SK-N-SH (cell line): ENCODE measurements at regions of chr15 and their contacts with region 1.

Region 1: GRCh38 chr15:99104788-99105513 is at the start of gene SYNM:
- DNase-seq: peak; percentile 98
- H3K4me3 ChIP-seq: peak within 1 kb of the TSS; percentile 61 to 62
- H3K27ac ChIP-seq: peak within 1 kb of the TSS in 1 of 2 experiments; percentile 75; a peak in 2 of 4 replicates
- H3K4me1 ChIP-seq: peaks cover 0 to 10% of the 10 kb centered on the region in 2 experiments; a peak in 2 of 4 replicates
- H3K27me3 ChIP-seq: no peaks in the 10 kb centered on the region
- CTCF ChIP-seq: peak; percentile 72
- EP300 ChIP-seq: no peak
- RAD21 ChIP-seq: peak; percentile 78
- polyA plus RNA-seq, gene SYNM: 4.3 and 5.0 TPM in 2 replicates

Region 2: GRCh38 chr15:99032935-99033334 is 72.0 kb before region 1 on chr15:
- CTCF ChIA-PET with region 1: no interaction called
- POLR2A ChIA-PET with region 1: no interaction called
- DNase-seq: no peak
- H3K4me3 ChIP-seq: no peak overlapping the region
- H3K27ac ChIP-seq: no peak overlapping the region
- H3K4me1 ChIP-seq: peaks cover 0 to 5% of the 10 kb centered on the region in 2 experiments; a peak in 1 of 4 replicates
- H3K27me3 ChIP-seq: no peaks in the 10 kb centered on the region; the same call in 1 of the 2 replicates
- CTCF ChIP-seq: no peak
- EP300 ChIP-seq: no peak
- RAD21 ChIP-seq: no peak

Region 3: DNA sequence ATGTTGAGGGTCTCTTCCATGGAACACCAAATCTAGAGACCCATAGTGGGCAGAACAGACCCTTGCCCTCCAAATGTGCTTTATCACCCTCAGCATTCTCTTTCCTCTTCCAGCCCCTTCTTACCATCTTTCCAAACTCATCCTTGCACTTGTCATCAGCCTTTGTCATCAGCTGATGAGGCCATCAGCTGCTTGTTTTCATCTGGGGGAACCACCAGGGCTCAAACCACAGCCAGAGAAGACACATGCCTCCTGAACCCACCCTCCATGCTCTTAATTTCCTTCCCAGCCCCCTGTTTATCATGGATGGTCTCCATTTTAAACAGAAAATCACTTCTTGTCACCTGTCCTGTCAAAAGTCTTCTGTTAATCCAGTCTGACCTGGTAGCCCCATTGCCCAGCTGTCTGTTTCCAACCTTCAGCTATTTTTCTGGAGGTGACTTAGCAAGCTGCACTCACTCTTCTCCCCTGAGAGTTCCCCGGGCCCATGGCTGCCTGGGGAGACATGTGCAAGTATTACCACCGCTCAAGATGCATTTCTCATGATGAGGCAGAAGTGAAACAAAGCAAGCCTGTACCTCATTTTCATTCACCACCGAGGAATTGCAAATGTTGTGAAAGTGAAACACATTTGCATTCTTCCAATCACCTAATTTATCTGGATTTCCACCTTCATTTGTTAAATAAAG is 14.8 kb before region 1 on chr15:
- CTCF ChIA-PET with region 1: interaction called, 19 read pairs
- POLR2A ChIA-PET with region 1: no interaction called
- DNase-seq: no peak
- H3K4me3 ChIP-seq: no peak overlapping the region
- H3K27ac ChIP-seq: no peak overlapping the region
- H3K4me1 ChIP-seq: no peaks in the 10 kb centered on the region
- H3K27me3 ChIP-seq: no peaks in the 10 kb centered on the region
- CTCF ChIP-seq: no peak
- EP300 ChIP-seq: no peak
- RAD21 ChIP-seq: no peak

Region 4: GRCh38 chr15:99123706-99124451 is 18.9 kb after region 1 on chr15:
- CTCF ChIA-PET with region 1: interaction called, 102 read pairs
- POLR2A ChIA-PET with region 1: interaction called, 3 read pairs
- DNase-seq: peak; percentile 93
- H3K4me3 ChIP-seq: peak overlapping the region; percentile 40 to 49
- H3K27ac ChIP-seq: peak overlapping the region; percentile 95 to 100
- H3K4me1 ChIP-seq: peaks cover 14 to 56% of the 10 kb centered on the region in 2 experiments
- H3K27me3 ChIP-seq: no peaks in the 10 kb centered on the region
- CTCF ChIP-seq: no peak; the same call in 1 of the 2 replicates
- EP300 ChIP-seq: peak; percentile 89
- RAD21 ChIP-seq: peak; percentile 19

Region 5: DNA sequence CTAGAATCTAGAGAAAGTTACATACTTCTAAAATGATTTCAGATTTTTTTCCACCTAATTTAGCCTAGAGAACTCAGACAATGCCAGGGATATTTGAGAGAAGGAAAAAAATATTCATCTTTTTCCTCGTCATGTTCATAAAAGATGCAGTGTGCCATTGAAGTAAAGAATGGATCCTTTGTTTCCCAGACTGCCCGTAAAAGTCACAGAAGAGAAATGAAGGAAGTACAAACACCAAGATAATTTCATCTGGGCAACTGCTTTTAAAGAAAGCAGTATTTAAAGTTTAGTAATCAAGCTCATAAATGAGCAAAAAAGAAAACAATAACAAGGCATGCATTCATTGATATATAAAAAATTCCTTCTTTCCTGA is 97.2 kb after region 1 on chr15:
- CTCF ChIA-PET with region 1: interaction called, 63 read pairs
- POLR2A ChIA-PET with region 1: no interaction called
- DNase-seq: no peak
- H3K4me3 ChIP-seq: no peak overlapping the region
- H3K27ac ChIP-seq: no peak overlapping the region
- H3K4me1 ChIP-seq: no peaks in the 10 kb centered on the region
- H3K27me3 ChIP-seq: no peaks in the 10 kb centered on the region
- CTCF ChIP-seq: no peak
- EP300 ChIP-seq: no peak
- RAD21 ChIP-seq: no peak

Region 6: DNA sequence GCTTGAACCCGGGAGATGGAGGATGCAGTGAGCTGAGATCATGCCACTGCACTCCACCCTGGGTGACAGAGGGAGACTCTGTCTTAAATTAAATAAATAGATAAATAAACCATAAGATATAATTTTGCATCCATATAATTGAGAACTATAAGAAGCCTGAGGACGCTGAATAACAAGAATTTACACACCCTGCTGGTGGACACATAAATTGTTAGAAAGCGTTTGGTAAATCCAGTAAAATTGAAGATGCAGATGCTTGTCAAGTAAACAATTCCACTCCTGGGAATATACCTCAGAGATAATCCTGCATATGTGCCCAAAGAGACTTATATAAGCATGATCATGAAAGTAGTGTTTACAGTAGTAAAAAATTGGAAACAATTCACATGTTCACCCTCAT is 102.7 kb after region 1 on chr15:
- CTCF ChIA-PET with region 1: interaction called, 149 read pairs
- POLR2A ChIA-PET with region 1: no interaction called
- DNase-seq: no peak
- H3K4me3 ChIP-seq: no peak overlapping the region
- H3K27ac ChIP-seq: no peak overlapping the region
- H3K4me1 ChIP-seq: peaks cover 0 to 6% of the 10 kb centered on the region in 2 experiments; a peak in 1 of 4 replicates
- H3K27me3 ChIP-seq: no peaks in the 10 kb centered on the region
- CTCF ChIP-seq: no peak
- EP300 ChIP-seq: no peak
- RAD21 ChIP-seq: no peak

Region 7: DNA sequence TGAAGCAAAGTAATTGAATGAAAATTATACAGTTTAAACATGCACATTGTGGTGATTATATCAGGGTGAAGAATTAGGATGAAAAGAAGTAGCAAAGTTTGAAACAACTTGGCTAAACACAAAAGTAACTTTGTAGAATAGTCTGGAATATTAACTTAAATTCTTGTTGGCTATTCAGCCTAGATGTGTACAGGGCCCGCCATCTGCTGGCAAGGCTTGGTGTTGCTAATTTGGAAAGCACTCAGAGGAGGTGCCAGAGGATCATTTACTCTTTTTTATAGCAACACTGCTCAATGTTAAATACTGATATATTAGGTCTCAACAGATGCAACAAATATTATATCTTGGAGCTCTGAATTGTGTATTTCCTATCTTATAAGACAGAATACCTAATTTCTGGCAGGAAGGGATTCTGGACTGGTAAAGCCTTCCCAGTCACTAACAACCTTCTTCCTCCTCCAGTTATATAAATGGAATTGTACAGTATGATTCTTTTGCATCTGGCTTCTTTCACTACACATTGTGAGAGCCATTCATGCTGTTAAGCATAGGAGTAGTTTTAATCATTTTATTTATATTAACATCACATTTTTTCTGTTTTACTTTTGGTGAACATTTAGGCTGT is 108.3 kb after region 1 on chr15:
- CTCF ChIA-PET with region 1: interaction called, 149 read pairs
- POLR2A ChIA-PET with region 1: no interaction called
- DNase-seq: peak; percentile 66
- H3K4me3 ChIP-seq: peak overlapping the region in 1 of 2 experiments; percentile 27; a peak in 1 of 4 replicates
- H3K27ac ChIP-seq: no peak overlapping the region; a peak in 1 of 4 replicates
- H3K4me1 ChIP-seq: peaks cover 0 to 6% of the 10 kb centered on the region in 2 experiments; a peak in 1 of 4 replicates
- H3K27me3 ChIP-seq: no peaks in the 10 kb centered on the region
- CTCF ChIP-seq: peak; percentile 96
- EP300 ChIP-seq: no peak
- RAD21 ChIP-seq: peak; percentile 98

Region 8: GRCh38 chr15:99224372-99225214 is 119.6 kb after region 1 on chr15:
- CTCF ChIA-PET with region 1: interaction called, 10 read pairs
- POLR2A ChIA-PET with region 1: no interaction called
- DNase-seq: no peak
- H3K4me3 ChIP-seq: no peak overlapping the region
- H3K27ac ChIP-seq: no peak overlapping the region
- H3K4me1 ChIP-seq: no peaks in the 10 kb centered on the region
- H3K27me3 ChIP-seq: no peaks in the 10 kb centered on the region
- CTCF ChIP-seq: no peak
- EP300 ChIP-seq: no peak
- RAD21 ChIP-seq: no peak